K562 (cell line): ENCODE measurements at regions of chr11 and their contacts with region 1.

Region 1: DNA sequence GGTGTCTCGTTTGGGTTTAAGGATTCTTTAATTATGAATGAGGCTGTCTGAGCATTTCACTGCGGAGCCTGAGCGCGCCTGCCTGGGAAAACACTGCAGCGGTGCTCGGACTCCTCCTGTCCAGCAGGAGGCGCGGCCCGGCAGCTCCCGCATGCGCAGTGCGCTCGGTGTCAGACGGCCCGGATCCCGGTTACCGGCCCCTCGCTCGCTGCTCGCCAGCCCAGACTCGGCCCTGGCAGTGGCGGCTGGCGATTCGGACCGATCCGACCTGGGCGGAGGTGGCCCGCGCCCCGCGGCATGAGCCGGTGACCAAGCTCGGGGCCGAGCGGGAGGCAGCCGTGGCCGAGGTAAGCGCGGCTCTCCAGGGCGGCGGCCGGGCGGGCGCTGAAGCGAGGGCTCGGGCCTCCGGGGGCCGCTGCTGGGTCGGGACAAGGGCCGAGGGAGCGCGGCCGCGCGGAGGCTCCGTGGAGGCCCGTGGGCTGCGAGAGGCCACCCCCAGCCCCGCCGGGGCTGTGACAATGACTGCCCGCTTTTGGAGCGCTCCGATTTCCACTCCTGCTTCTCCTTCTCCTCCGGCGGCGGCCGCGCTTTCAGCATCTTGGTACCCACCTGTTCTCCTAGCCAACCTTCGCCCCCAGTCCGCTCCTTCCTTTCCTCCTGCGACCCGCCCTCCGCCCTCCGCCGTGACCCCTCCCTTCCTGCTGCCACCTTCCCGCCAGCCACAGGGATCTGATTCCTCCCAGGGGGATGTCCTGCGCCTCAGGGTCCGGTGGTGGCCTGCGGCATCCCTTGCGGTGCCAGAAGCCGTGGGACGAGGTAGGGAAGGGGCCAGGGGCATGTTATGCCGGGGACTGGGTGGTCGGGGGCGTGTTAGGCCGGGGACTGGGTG is at the start of gene EXT2:
- DNase-seq: peak; percentile 91 to 95 (median 95)
- ATAC-seq: peak; percentile 96
- H3K4me3 ChIP-seq: peak within 1 kb of the TSS; percentile 94
- H3K27ac ChIP-seq: peak within 1 kb of the TSS; percentile 58; the same call in 2 of the 3 replicates
- H3K4me1 ChIP-seq: peaks cover 11 to 18% of the 10 kb centered on the region in 2 experiments; a peak in 4 of 5 replicates
- H3K27me3 ChIP-seq: no peaks in the 10 kb centered on the region
- CTCF ChIP-seq: peak; percentile 87 to 90 (median 87)
- EP300 ChIP-seq: no peak
- POLR2A ChIP-seq: peak; percentile 60; the same call in 1 of the 2 replicates
- RAD21 ChIP-seq: peak in 1 of 2 experiments; percentile 23; a peak in 1 of 4 replicates
- polyA plus RNA-seq, gene EXT2: 7.5 to 13.1 TPM

Region 2: DNA sequence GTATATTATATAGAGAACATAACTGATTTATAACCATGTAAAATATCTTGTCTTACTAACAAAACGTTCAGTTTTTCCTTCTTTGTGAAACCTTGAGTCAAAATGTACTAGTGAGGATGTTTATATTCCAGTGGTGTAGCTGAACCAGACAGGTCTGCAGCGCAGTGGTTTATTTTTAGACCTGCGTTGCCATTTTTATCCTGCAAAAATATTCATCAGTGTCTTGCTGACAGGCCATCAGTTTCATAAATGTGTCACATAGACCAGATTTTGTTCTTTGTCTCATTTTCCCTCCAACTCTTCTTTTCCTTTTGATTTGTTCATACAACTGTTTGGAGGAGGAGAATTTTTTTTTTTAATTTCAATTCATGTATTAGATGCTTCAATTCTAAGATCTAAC is 372.1 kb before region 1 on chr11:
- CTCF ChIA-PET with region 1: no interaction called
- POLR2A ChIA-PET with region 1: no interaction called
- in situ Hi-C with region 1: no loop called
- intact Hi-C with region 1: no loop called
- DNase-seq: no peak
- ATAC-seq: no peak
- H3K4me3 ChIP-seq: no peak overlapping the region
- H3K27ac ChIP-seq: no peak overlapping the region
- H3K4me1 ChIP-seq: no peaks in the 10 kb centered on the region
- H3K27me3 ChIP-seq: no peaks in the 10 kb centered on the region
- CTCF ChIP-seq: no peak
- EP300 ChIP-seq: no peak
- POLR2A ChIP-seq: no peak
- RAD21 ChIP-seq: no peak

Region 3: DNA sequence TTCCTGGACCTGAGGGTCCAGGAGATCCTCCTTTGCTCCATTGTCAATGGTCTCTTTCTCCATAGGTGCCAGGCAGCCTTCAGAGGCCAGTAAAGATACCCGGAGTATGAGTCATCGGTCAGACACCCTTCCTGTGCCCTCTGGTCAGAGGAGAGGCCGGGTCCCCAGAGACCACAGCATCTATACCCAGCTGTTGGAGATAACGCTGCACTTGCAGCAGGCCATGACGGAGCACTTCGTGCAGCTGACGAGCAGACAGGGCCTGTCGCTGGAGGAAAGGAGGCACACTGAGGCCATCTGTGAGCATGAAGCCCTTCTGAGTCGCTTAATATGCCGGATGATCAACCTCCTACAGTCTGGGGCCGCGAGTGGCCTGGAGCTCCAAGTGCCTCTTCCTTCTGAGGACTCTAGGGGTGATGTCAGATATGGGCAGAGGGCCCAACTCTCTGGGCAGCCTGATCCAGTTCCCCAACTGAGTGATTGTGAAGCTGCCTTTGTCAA is 47.8 kb before region 1 on chr11 and contains the start of gene ACCSL:
- CTCF ChIA-PET with region 1: no interaction called
- POLR2A ChIA-PET with region 1: no interaction called
- in situ Hi-C with region 1: no loop called
- intact Hi-C with region 1: no loop called
- DNase-seq: peak in 2 of 4 experiments; percentile 18 to 21
- ATAC-seq: peak; percentile 57; the same call in 2 of the 3 replicates
- H3K4me3 ChIP-seq: no peak within 1 kb of the TSS
- H3K27ac ChIP-seq: no peak within 1 kb of the TSS
- H3K4me1 ChIP-seq: no peaks in the 10 kb centered on the region; a peak in 1 of 5 replicates
- H3K27me3 ChIP-seq: peaks cover 0 to 11% of the 10 kb centered on the region in 2 experiments; a peak in 4 of 5 replicates
- CTCF ChIP-seq: no peak
- EP300 ChIP-seq: no peak
- POLR2A ChIP-seq: no peak
- RAD21 ChIP-seq: no peak
- polyA plus RNA-seq, gene ACCSL: not detected

Region 4: GRCh38 chr11:44065161-44065571 is 30.6 kb before region 1 on chr11:
- CTCF ChIA-PET with region 1: no interaction called
- POLR2A ChIA-PET with region 1: no interaction called
- in situ Hi-C with region 1: no loop called
- intact Hi-C with region 1: no loop called
- DNase-seq: no peak
- ATAC-seq: no peak
- H3K4me3 ChIP-seq: no peak overlapping the region
- H3K27ac ChIP-seq: no peak overlapping the region
- H3K4me1 ChIP-seq: peaks cover 10 to 20% of the 10 kb centered on the region in 2 experiments; a peak in 4 of 5 replicates
- H3K27me3 ChIP-seq: no peaks in the 10 kb centered on the region
- CTCF ChIP-seq: no peak
- EP300 ChIP-seq: no peak
- POLR2A ChIP-seq: no peak
- RAD21 ChIP-seq: no peak

Region 5: DNA sequence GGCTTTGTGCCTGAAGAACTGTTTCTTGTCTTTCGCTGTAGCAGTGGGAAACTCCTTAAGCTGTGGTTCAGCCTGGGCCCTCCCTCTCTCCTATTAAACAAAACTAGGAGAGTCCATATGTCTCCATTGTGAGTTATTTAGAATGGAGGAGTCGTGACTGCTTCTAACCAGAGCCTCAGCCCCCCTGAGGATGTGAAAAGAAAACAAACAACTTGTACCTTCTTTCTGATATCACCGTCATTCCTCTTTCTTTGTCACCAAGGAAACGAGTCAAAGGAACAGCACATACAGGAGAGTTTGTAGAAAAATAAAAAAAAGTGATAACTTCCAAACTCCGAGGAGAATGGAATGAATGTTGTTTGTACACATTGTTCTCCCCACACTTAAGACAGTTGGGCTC is 11.8 kb before region 1 on chr11:
- CTCF ChIA-PET with region 1: no interaction called
- POLR2A ChIA-PET with region 1: interaction called, 11 read pairs
- in situ Hi-C with region 1: no loop called
- intact Hi-C with region 1: no loop called
- DNase-seq: no peak
- ATAC-seq: no peak
- H3K4me3 ChIP-seq: no peak overlapping the region
- H3K27ac ChIP-seq: no peak overlapping the region
- H3K4me1 ChIP-seq: no peaks in the 10 kb centered on the region
- H3K27me3 ChIP-seq: no peaks in the 10 kb centered on the region
- CTCF ChIP-seq: no peak
- EP300 ChIP-seq: no peak
- POLR2A ChIP-seq: no peak
- RAD21 ChIP-seq: no peak

Region 6: GRCh38 chr11:44110231-44110679 is 14.5 kb after region 1 on chr11:
- CTCF ChIA-PET with region 1: interaction called, 13 read pairs
- POLR2A ChIA-PET with region 1: interaction called, 17 read pairs
- in situ Hi-C with region 1: no loop called
- intact Hi-C with region 1: no loop called
- DNase-seq: peak; percentile 60 to 75 (median 66)
- ATAC-seq: peak; percentile 100
- H3K4me3 ChIP-seq: no peak overlapping the region
- H3K27ac ChIP-seq: no peak overlapping the region
- H3K4me1 ChIP-seq: no peaks in the 10 kb centered on the region
- H3K27me3 ChIP-seq: no peaks in the 10 kb centered on the region
- CTCF ChIP-seq: peak; percentile 78 to 93 (median 84)
- EP300 ChIP-seq: no peak
- POLR2A ChIP-seq: no peak
- RAD21 ChIP-seq: peak; percentile 72 to 75